CD4-positive, alpha-beta T cell (primary cell): ENCODE measurements at regions of chr7 and their contacts with region 1.

Region 1: GRCh38 chr7:99504603-99505323 is at the start of gene ZKSCAN5:
- DNase-seq: peak; percentile 94 to 98 (median 97)
- ATAC-seq: peak; percentile 85
- H3K4me3 ChIP-seq: peak within 1 kb of the TSS; percentile 90
- H3K4me3 Mint-ChIP-seq: peak within 1 kb of the TSS; percentile 100
- H3K27ac ChIP-seq: peak within 1 kb of the TSS; percentile 93
- H3K27ac Mint-ChIP-seq: peak within 1 kb of the TSS; percentile 95
- H3K4me1 ChIP-seq: peaks cover 42% of the 10 kb centered on the region
- H3K4me1 Mint-ChIP-seq: peaks cover 38% of the 10 kb centered on the region
- H3K27me3 ChIP-seq: no peaks in the 10 kb centered on the region
- H3K27me3 Mint-ChIP-seq: no peaks in the 10 kb centered on the region
- CTCF ChIP-seq: peak; percentile 16
- total RNA-seq, gene ZKSCAN5: 3.8 to 4.4 TPM

Region 2: GRCh38 chr7:99465421-99465768 is 39.4 kb before region 1 on chr7:
- CTCF ChIA-PET with region 1: no interaction called
- POLR2A ChIA-PET with region 1: interaction called, 14 read pairs
- intact Hi-C with region 1: no loop called
- DNase-seq: no peak
- ATAC-seq: peak; percentile 7
- H3K4me3 ChIP-seq: peak overlapping the region; percentile 92
- H3K4me3 Mint-ChIP-seq: peak overlapping the region; percentile 92
- H3K27ac ChIP-seq: peak overlapping the region; percentile 64 to 68
- H3K27ac Mint-ChIP-seq: peak overlapping the region; percentile 91
- H3K4me1 ChIP-seq: peaks cover 51% of the 10 kb centered on the region
- H3K4me1 Mint-ChIP-seq: peaks cover 35% of the 10 kb centered on the region
- H3K27me3 ChIP-seq: no peaks in the 10 kb centered on the region
- H3K27me3 Mint-ChIP-seq: no peaks in the 10 kb centered on the region
- CTCF ChIP-seq: no peak

Region 3: GRCh38 chr7:99551767-99552463 is 47.2 kb after region 1 on chr7 and contains the start of gene FAM200A:
- CTCF ChIA-PET with region 1: interaction called, 3 read pairs
- POLR2A ChIA-PET with region 1: interaction called, 99 read pairs
- intact Hi-C with region 1: loop called in 1 of 2 experiments (anchors 2 kb)
- DNase-seq: peak; percentile 70 to 95 (median 80)
- ATAC-seq: peak; percentile 98
- H3K4me3 ChIP-seq: peak within 1 kb of the TSS; percentile 97
- H3K4me3 Mint-ChIP-seq: peak within 1 kb of the TSS; percentile 92
- H3K27ac ChIP-seq: peak within 1 kb of the TSS; percentile 86 to 92
- H3K27ac Mint-ChIP-seq: peak within 1 kb of the TSS; percentile 80
- H3K4me1 ChIP-seq: peaks cover 33% of the 10 kb centered on the region
- H3K4me1 Mint-ChIP-seq: peaks cover 56% of the 10 kb centered on the region
- H3K27me3 ChIP-seq: no peaks in the 10 kb centered on the region
- H3K27me3 Mint-ChIP-seq: no peaks in the 10 kb centered on the region
- CTCF ChIP-seq: no peak
- total RNA-seq, gene FAM200A: 1.5 to 1.8 TPM

Region 4: DNA sequence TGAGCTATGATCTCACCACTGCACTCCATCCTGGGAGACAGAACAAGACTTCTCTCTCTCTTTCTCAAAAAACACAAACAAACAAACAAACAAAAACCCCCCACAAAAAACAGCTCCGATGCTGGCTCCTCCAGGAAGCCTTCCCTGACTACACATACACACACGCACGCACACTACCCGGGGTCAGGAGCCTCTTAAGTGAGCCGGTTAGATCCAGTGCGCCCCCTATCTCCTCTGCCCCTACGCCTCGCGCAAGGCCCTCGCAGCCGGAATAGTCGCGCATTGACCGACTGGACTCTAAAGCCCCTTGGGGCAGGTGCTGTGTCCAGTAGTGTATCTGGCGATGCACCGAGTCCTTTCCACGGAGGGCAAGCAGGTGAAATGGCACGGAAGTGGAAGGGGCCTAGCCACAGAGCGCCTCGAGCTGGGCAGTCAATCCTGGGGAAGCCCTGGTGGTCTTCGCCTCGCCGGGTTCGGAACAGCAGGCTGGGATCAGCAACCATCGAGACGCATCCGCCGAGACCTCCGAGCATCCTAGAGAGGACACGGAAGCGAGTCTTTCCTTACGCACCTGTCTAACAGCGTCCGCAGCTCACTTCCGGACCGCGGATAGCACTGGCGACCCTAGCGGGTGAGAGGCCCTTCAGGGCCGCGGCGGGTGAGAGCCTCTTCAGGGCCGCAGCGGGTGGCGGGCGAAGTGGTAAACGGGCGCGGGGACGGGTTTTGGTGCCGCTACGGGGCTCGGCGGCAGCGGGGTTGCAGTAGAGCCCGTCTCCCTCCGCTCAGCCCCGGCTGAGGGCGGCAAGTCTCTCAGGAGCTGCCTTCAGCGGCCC is 111.8 kb after region 1 on chr7 and contains the start of gene ZSCAN25:
- CTCF ChIA-PET with region 1: no interaction called
- POLR2A ChIA-PET with region 1: interaction called, 15 read pairs
- intact Hi-C with region 1: loop called (anchors 1 to 2 kb)
- DNase-seq: peak; percentile 73 to 93 (median 83)
- ATAC-seq: peak; percentile 94
- H3K4me3 ChIP-seq: peak within 1 kb of the TSS; percentile 96
- H3K4me3 Mint-ChIP-seq: peak within 1 kb of the TSS; percentile 99
- H3K27ac ChIP-seq: peak within 1 kb of the TSS; percentile 78 to 80
- H3K27ac Mint-ChIP-seq: peak within 1 kb of the TSS; percentile 92
- H3K4me1 ChIP-seq: peaks cover 20% of the 10 kb centered on the region
- H3K4me1 Mint-ChIP-seq: peaks cover 44% of the 10 kb centered on the region
- H3K27me3 ChIP-seq: no peaks in the 10 kb centered on the region
- H3K27me3 Mint-ChIP-seq: no peaks in the 10 kb centered on the region
- CTCF ChIP-seq: no peak
- total RNA-seq, gene ZSCAN25: 41.5 to 44.2 TPM

Region 5: GRCh38 chr7:100015232-100016209 is 510.8 kb after region 1 on chr7 and contains the start of gene ZKSCAN1:
- CTCF ChIA-PET with region 1: no interaction called
- POLR2A ChIA-PET with region 1: no interaction called
- intact Hi-C with region 1: loop called in 1 of 2 experiments (anchors 10 kb)
- DNase-seq: peak; percentile 70 to 96 (median 81)
- ATAC-seq: peak; percentile 94
- H3K4me3 ChIP-seq: peak within 1 kb of the TSS; percentile 95
- H3K4me3 Mint-ChIP-seq: peak within 1 kb of the TSS; percentile 97
- H3K27ac ChIP-seq: peak within 1 kb of the TSS; percentile 76 to 91
- H3K27ac Mint-ChIP-seq: peak within 1 kb of the TSS; percentile 94
- H3K4me1 ChIP-seq: peaks cover 31% of the 10 kb centered on the region
- H3K4me1 Mint-ChIP-seq: peaks cover 39% of the 10 kb centered on the region
- H3K27me3 ChIP-seq: no peaks in the 10 kb centered on the region
- H3K27me3 Mint-ChIP-seq: no peaks in the 10 kb centered on the region
- CTCF ChIP-seq: no peak
- total RNA-seq, gene ZKSCAN1: 42.3 to 45.0 TPM

Region 6: DNA sequence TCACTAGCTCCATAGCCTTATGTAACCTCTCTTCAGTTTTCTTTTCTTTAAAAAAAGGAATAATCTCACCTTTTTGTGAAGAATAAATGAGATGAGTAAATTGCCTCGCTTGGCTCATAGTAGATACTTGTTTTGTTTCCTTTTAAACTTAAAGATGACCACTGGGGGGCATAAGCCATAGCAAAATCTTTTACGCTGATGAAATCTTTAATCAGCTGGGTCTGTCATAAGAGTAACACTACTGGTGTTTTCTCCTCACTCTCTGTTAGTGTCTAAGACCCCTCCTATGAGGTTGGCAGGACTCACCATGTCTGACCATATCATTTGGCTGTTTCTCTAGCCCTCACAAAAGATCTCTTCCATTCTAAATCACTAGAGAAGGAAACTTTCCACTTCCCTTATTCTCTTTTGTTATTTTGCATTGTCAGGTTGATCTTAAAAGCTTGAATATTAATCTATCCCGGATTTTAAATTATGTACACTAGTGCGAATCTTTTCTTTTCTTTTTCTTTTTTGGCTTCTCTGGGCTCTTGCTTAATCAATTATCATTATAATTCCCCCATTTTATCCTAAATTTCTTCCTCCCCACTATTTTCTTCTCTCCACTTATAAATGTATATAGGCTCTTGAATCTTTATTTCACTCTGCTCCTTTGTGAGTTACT is 685.4 kb after region 1 on chr7:
- CTCF ChIA-PET with region 1: no interaction called
- POLR2A ChIA-PET with region 1: no interaction called
- intact Hi-C with region 1: no loop called
- DNase-seq: peak in 3 of 14 experiments; percentile 72 to 77 (median 73)
- ATAC-seq: peak; percentile 84
- H3K4me3 ChIP-seq: no peak overlapping the region
- H3K4me3 Mint-ChIP-seq: no peak overlapping the region
- H3K27ac ChIP-seq: no peak overlapping the region
- H3K27ac Mint-ChIP-seq: peak overlapping the region; percentile 25
- H3K4me1 ChIP-seq: peaks cover 1% of the 10 kb centered on the region
- H3K4me1 Mint-ChIP-seq: peaks cover 44% of the 10 kb centered on the region
- H3K27me3 ChIP-seq: no peaks in the 10 kb centered on the region
- H3K27me3 Mint-ChIP-seq: no peaks in the 10 kb centered on the region
- CTCF ChIP-seq: peak; percentile 55